Dendritic cell treated with granulocyte-macrophage colony-stimulating factor and Interleukin-4, amounts not matched to agents 40 ng/mL and 50 ng/mL, for 4 days (primary cell): ENCODE measurements at regions of chr10 and their contacts with region 1.

Region 1: GRCh38 chr10:74151056-74151878 is at the start of gene ADK:
- H3K4me3 Mint-ChIP-seq: no peak within 1 kb of the TSS
- H3K27ac Mint-ChIP-seq: no peak within 1 kb of the TSS
- H3K4me1 Mint-ChIP-seq: peaks cover 36% of the 10 kb centered on the region
- H3K27me3 Mint-ChIP-seq: no peaks in the 10 kb centered on the region

Region 2: GRCh38 chr10:74213571-74214162 is 62.4 kb after region 1 on chr10:
- intact Hi-C with region 1: no loop called
- H3K4me3 Mint-ChIP-seq: no peak overlapping the region
- H3K27ac Mint-ChIP-seq: no peak overlapping the region
- H3K4me1 Mint-ChIP-seq: no peaks in the 10 kb centered on the region
- H3K27me3 Mint-ChIP-seq: no peaks in the 10 kb centered on the region

Region 3: GRCh38 chr10:74227697-74228424 is 76.6 kb after region 1 on chr10:
- intact Hi-C with region 1: loop called (anchors 5 kb)
- H3K4me3 Mint-ChIP-seq: no peak overlapping the region
- H3K27ac Mint-ChIP-seq: peak overlapping the region; percentile 88
- H3K4me1 Mint-ChIP-seq: peaks cover 15% of the 10 kb centered on the region
- H3K27me3 Mint-ChIP-seq: no peaks in the 10 kb centered on the region